RWPE1 (cell line): ENCODE measurements at regions of chr1 and their contacts with region 1.

Region 1: DNA sequence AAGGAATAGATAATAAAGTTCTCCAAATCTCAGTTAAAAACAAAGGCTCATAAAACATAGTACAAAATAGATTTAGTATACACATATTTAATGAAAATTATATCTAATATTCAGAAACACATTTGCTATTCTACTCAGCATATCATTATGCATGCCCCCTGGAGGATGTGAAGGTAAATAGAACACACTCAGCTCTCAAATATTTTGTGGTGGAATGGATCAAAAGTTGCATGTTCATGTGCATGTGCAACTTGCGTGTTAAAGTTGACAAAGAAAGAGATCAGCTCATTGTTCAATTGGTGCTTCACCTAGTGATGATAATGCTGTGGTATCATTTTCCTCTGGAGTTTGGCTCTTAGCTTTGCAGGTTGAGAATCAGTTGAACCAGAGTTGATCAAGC is 4.9 kb upstream of the ZNF644 start:
- DNase-seq: peak; percentile 16
- H3K27ac ChIP-seq: no peak overlapping the region
- CTCF ChIP-seq: no peak

Region 2: GRCh38 chr1:91099746-91100621 is 73.2 kb after region 1 on chr1:
- CTCF ChIA-PET with region 1: no interaction called
- POLR2A ChIA-PET with region 1: no interaction called
- DNase-seq: no peak
- H3K27ac ChIP-seq: no peak overlapping the region
- CTCF ChIP-seq: no peak

Region 3: GRCh38 chr1:91173346-91173890 is 146.6 kb after region 1 on chr1:
- CTCF ChIA-PET with region 1: no interaction called
- POLR2A ChIA-PET with region 1: no interaction called
- DNase-seq: no peak
- H3K27ac ChIP-seq: no peak overlapping the region
- CTCF ChIP-seq: no peak

Region 4: DNA sequence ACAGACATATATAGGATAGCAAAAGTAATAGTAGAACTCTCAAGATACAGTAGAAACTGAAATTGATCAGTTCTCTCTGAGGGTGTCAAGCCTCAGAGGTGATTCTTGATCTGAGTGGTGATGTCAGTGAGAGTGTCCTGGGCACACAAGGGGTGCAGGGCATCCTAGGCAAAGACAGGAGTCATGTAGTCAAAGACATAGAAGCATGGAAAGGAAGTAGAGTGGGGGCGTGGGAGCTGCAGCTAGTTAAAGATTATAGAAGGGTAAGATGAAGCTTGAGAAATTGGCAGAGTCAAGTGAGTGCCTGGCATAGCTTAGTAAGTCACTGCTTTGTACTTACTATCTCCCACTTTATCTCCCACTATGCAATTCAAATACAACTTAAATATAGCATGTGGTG is 496.7 kb after region 1 on chr1:
- CTCF ChIA-PET with region 1: interaction called, 10 read pairs
- POLR2A ChIA-PET with region 1: no interaction called
- DNase-seq: no peak
- H3K27ac ChIP-seq: no peak overlapping the region
- CTCF ChIP-seq: no peak